HEK293 (cell line): ENCODE measurements at regions of chr12 and their contacts with region 1.

Region 1: GRCh38 chr12:7884689-7885088 is 12.0 kb upstream of the SLC2A14 start:
- H3K4me3 ChIP-seq: no peak overlapping the region
- H3K27ac ChIP-seq: no peak overlapping the region
- H3K4me1 ChIP-seq: no peaks in the 10 kb centered on the region
- CTCF ChIP-seq: no peak

Region 2: GRCh38 chr12:7853557-7853956 is 31.1 kb before region 1 on chr12:
- CTCF ChIA-PET with region 1: no interaction called
- POLR2A ChIA-PET with region 1: no interaction called
- H3K4me3 ChIP-seq: no peak overlapping the region
- H3K27ac ChIP-seq: no peak overlapping the region
- H3K4me1 ChIP-seq: no peaks in the 10 kb centered on the region
- CTCF ChIP-seq: no peak

Region 3: GRCh38 chr12:8018666-8019581 is 134.2 kb after region 1 on chr12:
- CTCF ChIA-PET with region 1: no interaction called
- POLR2A ChIA-PET with region 1: no interaction called
- H3K4me3 ChIP-seq: no peak overlapping the region
- H3K27ac ChIP-seq: no peak overlapping the region
- H3K4me1 ChIP-seq: no peaks in the 10 kb centered on the region
- CTCF ChIP-seq: no peak

Region 4: DNA sequence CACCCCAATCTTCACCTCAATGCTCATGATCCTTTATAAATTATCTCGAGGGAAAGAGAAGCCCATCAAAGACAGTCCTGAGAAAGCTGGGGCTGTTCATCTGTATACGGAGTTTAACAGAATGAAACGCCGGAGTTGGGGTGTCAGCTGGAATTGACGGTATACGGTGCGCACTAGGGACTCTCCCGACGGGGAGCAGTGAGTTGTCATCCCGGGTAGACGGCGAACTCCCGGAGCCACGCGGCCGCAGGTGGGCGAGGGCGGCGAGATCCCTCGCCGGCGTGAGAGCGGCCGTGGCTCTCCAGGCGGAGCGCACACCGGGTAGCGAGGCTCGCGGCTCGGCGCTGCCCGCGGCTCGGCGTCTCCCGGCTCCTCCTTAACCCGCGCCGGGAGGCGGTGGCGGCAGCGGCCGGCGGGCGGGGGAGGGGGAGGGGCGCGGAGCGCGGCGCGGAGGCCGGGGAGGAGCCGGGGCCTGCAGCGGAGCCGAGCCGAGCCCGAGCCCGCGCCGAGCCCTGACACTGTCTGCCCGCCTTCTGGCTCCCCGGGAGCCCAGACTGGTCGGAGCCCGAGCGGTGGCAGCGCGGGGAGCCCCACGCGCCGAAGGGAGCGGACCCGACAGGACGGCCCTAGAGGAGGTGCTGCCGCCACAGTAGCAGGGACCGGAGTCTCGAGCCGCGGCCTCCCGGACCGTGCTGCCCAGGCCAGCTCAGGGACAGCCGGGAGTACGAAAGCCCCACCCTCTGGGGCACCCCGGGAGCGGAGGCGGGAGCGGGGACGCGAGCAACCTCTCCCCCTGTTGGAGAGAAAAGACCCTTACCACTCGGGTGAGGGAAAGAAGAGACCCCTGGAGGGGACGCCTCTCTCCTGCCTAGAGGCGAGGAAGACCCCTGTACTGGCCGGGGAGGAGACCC is 147.8 kb after region 1 on chr12 and contains the start of gene FOXJ2:
- CTCF ChIA-PET with region 1: no interaction called
- POLR2A ChIA-PET with region 1: interaction called, 10 read pairs
- H3K4me3 ChIP-seq: peak within 1 kb of the TSS; percentile 95
- H3K27ac ChIP-seq: peak within 1 kb of the TSS; percentile 82
- H3K4me1 ChIP-seq: peaks cover 2% of the 10 kb centered on the region
- CTCF ChIP-seq: peak; percentile 75